Sciatic nerve (tissue), 2 donors: ENCODE measurements at regions of chr10 and their contacts with region 1.

Region 1: GRCh38 chr10:60461688-60462087 is 72.0 kb upstream of the ANK3 start:
- DNase-seq: no peak
- ATAC-seq: peak; percentile 55

Region 2: GRCh38 chr10:59688921-59689351 is 772.8 kb before region 1 on chr10:
- intact Hi-C with region 1: no loop called
- DNase-seq: no peak
- ATAC-seq: no peak

Region 3: GRCh38 chr10:60212195-60212594 is 249.5 kb before region 1 on chr10:
- intact Hi-C with region 1: no loop called
- DNase-seq: no peak
- ATAC-seq: no peak

Region 4: GRCh38 chr10:60394446-60394845 is 67.2 kb before region 1 on chr10:
- intact Hi-C with region 1: no loop called
- DNase-seq: no peak
- ATAC-seq: no peak

Region 5: GRCh38 chr10:60536529-60537114 is 74.9 kb after region 1 on chr10:
- intact Hi-C with region 1: no loop called
- DNase-seq: no peak
- ATAC-seq: no peak

Region 6: DNA sequence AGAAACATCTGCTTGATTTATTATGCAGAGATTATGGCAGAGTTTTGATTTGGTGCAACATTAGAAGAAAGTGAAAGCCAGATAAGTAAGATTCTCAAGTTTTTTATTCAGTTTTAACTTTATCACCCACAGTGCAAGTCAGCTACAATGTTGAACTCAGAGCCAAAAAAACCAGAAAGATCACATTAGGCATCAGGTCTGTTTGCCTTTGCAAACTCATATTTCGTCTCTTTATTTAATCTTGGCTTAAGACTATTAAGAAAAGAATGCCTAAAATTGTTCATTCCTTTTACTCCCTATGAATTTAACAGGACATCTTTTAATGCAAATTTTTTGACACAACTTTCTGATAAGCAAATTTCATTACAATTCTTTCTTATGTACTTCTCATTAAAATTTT is 1067.5 kb after region 1 on chr10:
- intact Hi-C with region 1: loop called (anchors 5 kb)
- DNase-seq: no peak
- ATAC-seq: no peak